ENCODE measurements at regions of chr18 and their contacts with region 1.

Region 1: GRCh38 chr18:10892786-10893185 is 256.6 kb downstream of the PIEZO2 start:
- DNase-seq: no peak
- ATAC-seq: peak; percentile 29; the same call in 1 of the 3 replicates
- H3K4me3 ChIP-seq: no peak overlapping the region
- H3K27ac ChIP-seq: no peak overlapping the region
- H3K4me1 ChIP-seq: peaks cover 13% of the 10 kb centered on the region
- H3K27me3 ChIP-seq: no peaks in the 10 kb centered on the region
- CTCF ChIP-seq: no peak
- EP300 ChIP-seq: no peak
- POLR2A ChIP-seq: no peak
- RAD21 ChIP-seq: no peak

Region 2: DNA sequence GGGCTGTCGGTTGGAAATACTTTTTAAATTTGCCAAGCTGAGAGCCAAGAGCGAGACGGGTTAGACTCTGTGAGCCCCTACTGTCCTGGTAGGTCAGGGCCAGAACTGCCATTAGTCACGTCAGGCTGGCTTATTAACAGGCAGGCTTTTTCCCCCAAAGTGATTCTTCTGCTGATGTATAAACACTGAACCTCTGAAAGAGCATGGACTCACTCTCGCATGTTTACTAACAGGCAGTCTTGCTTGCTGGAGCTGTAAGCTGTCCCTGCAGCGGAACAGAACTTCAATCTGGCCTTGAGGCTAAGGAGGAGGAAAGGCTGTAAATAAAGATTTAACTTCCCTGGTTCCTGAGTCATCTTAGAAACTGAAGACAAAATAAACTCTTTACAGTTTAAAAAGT is 31.9 kb before region 1 on chr18:
- CTCF ChIA-PET with region 1: interaction called, 11 read pairs
- POLR2A ChIA-PET with region 1: no interaction called
- RAD21 ChIA-PET with region 1: no interaction called
- SMC1A ChIA-PET with region 1: interaction called, 6 read pairs
- in situ Hi-C with region 1: no loop called
- intact Hi-C with region 1: no loop called
- DNase-seq: no peak
- ATAC-seq: no peak
- H3K4me3 ChIP-seq: no peak overlapping the region
- H3K27ac ChIP-seq: no peak overlapping the region
- H3K4me1 ChIP-seq: no peaks in the 10 kb centered on the region
- H3K27me3 ChIP-seq: no peaks in the 10 kb centered on the region
- CTCF ChIP-seq: no peak
- EP300 ChIP-seq: no peak
- POLR2A ChIP-seq: no peak
- RAD21 ChIP-seq: no peak

Region 3: GRCh38 chr18:11259469-11260150 is 366.8 kb after region 1 on chr18:
- CTCF ChIA-PET with region 1: no interaction called
- POLR2A ChIA-PET with region 1: no interaction called
- RAD21 ChIA-PET with region 1: no interaction called
- SMC1A ChIA-PET with region 1: no interaction called
- in situ Hi-C with region 1: no loop called
- intact Hi-C with region 1: no loop called
- DNase-seq: no peak
- ATAC-seq: no peak
- H3K4me3 ChIP-seq: no peak overlapping the region
- H3K27ac ChIP-seq: no peak overlapping the region
- H3K4me1 ChIP-seq: no peaks in the 10 kb centered on the region
- H3K27me3 ChIP-seq: no peaks in the 10 kb centered on the region; a peak in 1 of 4 replicates
- CTCF ChIP-seq: no peak
- EP300 ChIP-seq: no peak
- POLR2A ChIP-seq: no peak
- RAD21 ChIP-seq: no peak